Common myeloid progenitor, CD34-positive (primary cell): ENCODE measurements at regions of chr12 and their contacts with region 1.

Region 1: DNA sequence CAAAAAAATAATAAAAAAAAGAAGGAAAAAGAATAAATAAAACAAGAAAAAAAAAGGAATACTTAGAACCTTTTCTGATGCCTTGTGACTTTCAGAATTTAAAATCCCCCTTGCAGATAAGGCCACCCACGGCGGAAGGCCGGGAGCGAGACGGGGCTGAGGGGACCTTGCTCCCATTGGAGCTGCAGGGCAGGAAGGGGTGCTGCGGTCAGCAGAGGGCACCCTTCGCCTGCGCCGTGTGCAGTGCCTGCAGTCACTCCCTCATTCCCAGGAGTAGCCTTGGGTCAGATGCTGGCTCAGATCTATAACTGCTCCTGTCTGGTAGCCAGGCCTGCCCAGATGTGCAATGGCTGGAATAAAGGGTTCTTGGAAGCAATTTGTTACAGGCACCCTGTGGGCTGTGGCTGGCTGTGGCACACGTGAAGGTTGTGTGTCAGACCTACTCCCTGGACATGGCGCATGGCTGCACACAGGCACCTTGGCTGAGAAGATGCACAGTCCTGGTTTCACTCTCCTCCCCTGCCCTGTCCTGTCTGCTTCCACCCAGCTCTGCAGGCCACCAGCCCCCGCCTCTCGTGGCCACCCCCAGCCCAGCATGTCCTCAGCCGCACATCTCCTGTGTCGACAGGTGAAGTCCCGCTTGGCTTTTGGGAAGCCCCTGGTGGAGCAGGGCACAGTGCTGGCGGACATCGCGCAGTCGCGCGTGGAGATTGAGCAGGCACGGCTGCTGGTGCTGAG is 13.4 kb upstream of the ALDH2 start:
- DNase-seq: no peak
- H3K4me3 ChIP-seq: no peak overlapping the region
- H3K27ac ChIP-seq: no peak overlapping the region
- H3K4me1 ChIP-seq: peaks cover 2 to 28% (median 28%) of the 10 kb centered on the region in 4 experiments
- H3K27me3 ChIP-seq: no peaks in the 10 kb centered on the region

Region 2: DNA sequence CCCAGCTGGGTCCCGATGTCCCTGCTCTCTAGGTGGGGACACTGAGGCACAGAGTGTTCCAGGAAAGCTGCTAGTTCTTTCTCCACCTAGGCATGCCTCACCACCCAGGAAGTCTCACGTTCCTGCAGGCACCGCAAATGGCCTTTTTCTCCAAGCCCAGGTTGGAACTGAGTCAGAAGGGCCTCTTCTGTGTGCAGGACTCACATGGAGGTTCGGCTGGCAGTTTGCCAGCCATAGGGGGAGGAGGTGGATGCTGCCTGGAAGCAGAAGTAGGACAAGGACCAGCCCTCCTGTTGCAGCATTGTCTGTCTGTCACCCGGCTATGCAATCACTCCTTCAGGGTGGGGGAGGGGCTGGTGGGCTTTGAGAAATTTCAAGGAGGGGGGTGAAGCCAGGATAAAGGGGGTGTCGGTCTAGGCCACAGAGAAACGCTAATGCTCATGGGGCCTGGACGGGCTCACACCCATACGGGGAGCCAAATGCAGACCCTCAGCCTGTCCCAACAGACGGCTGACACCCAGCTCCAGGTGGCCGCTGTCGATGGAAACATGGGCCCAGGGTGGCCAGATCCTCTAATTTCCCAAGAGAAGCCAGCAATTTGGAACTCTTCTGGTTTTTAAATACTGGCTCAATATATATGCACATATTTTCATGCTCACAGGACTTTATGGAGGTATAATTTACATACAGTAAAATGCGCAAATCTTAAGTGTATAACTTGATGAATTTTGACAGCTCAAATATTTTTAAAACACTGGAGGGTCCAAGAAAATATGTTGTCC is 504.9 kb before region 1 on chr12:
- CTCF ChIA-PET with region 1: no interaction called
- POLR2A ChIA-PET with region 1: no interaction called
- DNase-seq: peak in 2 of 3 donors; percentile 11 to 13
- H3K4me3 ChIP-seq: no peak overlapping the region
- H3K27ac ChIP-seq: no peak overlapping the region
- H3K4me1 ChIP-seq: no peaks in the 10 kb centered on the region
- H3K27me3 ChIP-seq: peaks cover 0 to 1% (median 0%) of the 10 kb centered on the region in 5 experiments

Region 3: DNA sequence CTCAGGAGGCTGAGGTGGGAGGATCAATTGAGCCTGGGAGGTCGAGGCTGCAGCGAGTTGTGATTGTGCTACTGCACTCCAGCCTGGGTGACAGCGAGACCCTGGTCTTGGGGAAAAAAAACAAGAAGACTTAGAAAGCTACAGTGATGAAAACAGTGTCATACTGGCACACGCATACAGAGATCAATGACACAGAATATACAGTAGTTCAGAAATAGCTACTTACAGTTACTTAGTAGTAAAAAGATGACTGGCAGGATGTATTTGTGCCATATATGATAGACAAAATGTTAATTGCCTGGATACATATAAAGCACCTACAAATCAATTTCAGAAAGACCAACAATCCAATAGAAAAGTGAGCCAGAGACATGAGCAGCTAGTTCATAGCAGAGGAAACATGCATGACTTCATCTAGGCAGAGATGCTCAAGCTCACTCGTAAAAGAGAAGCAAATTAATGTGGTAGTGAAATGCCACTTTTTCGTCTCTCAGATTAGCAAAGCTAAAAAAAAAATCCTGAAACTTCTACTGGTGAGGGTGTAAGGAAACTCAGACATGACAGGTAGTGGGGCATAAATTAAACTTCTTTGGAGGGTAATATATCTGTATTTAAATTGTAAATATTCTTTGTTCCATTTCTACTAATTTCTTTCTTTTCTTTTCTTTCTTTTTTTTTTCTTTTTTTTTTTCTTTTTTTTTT is 11.0 kb after region 1 on chr12:
- CTCF ChIA-PET with region 1: interaction called, 13 read pairs
- POLR2A ChIA-PET with region 1: interaction called, 4 read pairs
- DNase-seq: peak in 1 of 3 donors; percentile 41
- H3K4me3 ChIP-seq: no peak overlapping the region
- H3K27ac ChIP-seq: no peak overlapping the region
- H3K4me1 ChIP-seq: peaks cover 7 to 62% (median 59%) of the 10 kb centered on the region in 4 experiments
- H3K27me3 ChIP-seq: no peaks in the 10 kb centered on the region

Region 4: GRCh38 chr12:111775205-111776193 is 22.2 kb after region 1 on chr12:
- CTCF ChIA-PET with region 1: interaction called, 22 read pairs
- POLR2A ChIA-PET with region 1: interaction called, 4 read pairs
- DNase-seq: peak; percentile 85 to 95 (median 94)
- H3K4me3 ChIP-seq: peak overlapping the region in 5 of 7 experiments; percentile 10 to 64 (median 44)
- H3K27ac ChIP-seq: peak overlapping the region; percentile 85 to 92
- H3K4me1 ChIP-seq: peaks cover 10 to 40% (median 27%) of the 10 kb centered on the region in 4 experiments
- H3K27me3 ChIP-seq: no peaks in the 10 kb centered on the region

Region 5: DNA sequence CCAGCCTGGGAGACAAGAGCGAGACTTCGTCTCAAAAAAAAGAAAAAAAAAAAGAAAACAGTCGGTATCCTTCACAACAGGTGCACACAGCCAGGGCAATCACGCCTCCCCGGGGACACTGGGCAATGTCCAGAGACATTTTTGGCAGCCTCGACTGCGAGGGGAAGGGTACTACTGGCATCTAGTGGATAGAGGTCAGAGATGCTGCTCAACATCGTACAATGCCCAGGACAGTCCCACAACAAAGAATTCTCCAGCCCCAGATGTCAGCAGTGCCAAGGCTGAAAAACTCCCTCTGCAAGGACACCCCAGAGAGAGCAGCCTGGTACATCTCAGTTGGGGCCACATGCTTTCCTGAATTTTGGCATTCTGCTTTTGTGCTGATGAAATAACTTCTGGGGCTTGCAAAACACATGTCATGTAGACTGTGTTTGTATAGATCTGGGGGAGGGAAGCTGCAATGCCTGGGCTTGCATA is 34.9 kb after region 1 on chr12:
- CTCF ChIA-PET with region 1: interaction called, 61 read pairs
- POLR2A ChIA-PET with region 1: no interaction called
- DNase-seq: peak in 2 of 3 donors; percentile 28 to 31
- H3K4me3 ChIP-seq: no peak overlapping the region
- H3K27ac ChIP-seq: no peak overlapping the region
- H3K4me1 ChIP-seq: no peaks in the 10 kb centered on the region
- H3K27me3 ChIP-seq: no peaks in the 10 kb centered on the region

Region 6: DNA sequence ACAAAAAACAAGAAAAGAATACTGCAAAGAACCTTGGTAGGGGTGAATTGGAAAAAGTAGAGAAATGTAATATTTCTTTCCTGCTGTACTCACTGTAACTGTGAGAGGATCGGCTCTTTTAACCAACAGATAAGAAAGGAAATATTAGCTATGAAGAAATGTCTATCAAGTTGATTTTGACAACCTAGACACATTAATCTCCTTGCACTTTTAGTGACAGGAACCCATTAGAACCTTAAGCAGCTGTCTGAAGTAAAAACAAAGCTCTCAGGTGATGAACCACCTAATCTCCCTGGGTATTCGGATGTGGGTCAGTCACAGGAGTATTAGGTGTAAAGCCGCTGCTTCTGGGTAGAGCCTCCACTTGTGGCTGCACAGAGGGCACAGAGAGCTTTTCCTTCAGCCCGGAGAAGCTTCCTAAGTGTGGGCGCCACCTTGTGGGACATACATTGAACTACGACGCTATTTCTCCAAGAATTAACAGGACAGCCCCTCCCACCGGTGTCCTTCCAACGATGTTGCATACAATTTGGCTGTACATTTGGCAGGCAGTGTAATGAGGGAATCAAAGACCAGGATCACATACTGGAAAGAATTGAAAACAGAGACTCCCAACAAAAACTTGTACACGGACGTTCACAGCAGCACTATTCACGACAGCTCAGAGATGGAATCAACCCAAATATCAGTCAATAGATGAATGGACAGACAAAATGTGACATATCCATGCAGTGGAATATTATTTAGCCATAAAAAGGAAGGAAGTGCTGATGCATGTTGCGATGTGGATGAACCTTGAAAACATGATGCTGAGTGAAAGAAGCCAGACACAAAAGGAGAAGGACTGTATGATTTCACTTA is 59.8 kb after region 1 on chr12:
- CTCF ChIA-PET with region 1: interaction called, 77 read pairs
- POLR2A ChIA-PET with region 1: no interaction called
- DNase-seq: peak; percentile 79 to 88 (median 85)
- H3K4me3 ChIP-seq: no peak overlapping the region
- H3K27ac ChIP-seq: no peak overlapping the region
- H3K4me1 ChIP-seq: no peaks in the 10 kb centered on the region
- H3K27me3 ChIP-seq: no peaks in the 10 kb centered on the region